H1 (cell line): ENCODE measurements at regions of chr18 and their contacts with region 1.

Region 1: GRCh38 chr18:13726232-13726971 is at the starts of genes FAM210A and RNMT:
- DNase-seq: peak; percentile 80 to 89
- H3K4me3 ChIP-seq: peak within 1 kb of the TSS; percentile 76 to 97 (median 95)
- H3K27ac ChIP-seq: peak within 1 kb of the TSS; percentile 82; the same call in 1 of the 2 replicates
- H3K4me1 ChIP-seq: peaks cover 0 to 5% (median 3%) of the 10 kb centered on the region in 4 experiments; a peak in 3 of 7 replicates
- H3K27me3 ChIP-seq: no peaks in the 10 kb centered on the region
- CTCF ChIP-seq: no peak
- EP300 ChIP-seq: no peak
- POLR2A ChIP-seq: peak in 1 of 2 experiments; percentile 56; a peak in 1 of 3 replicates
- RAD21 ChIP-seq: no peak
- total RNA-seq, gene FAM210A: 25.4 and 27.2 TPM in 2 replicates
- total RNA-seq, gene RNMT: 59.6 and 63.5 TPM in 2 replicates

Region 2: DNA sequence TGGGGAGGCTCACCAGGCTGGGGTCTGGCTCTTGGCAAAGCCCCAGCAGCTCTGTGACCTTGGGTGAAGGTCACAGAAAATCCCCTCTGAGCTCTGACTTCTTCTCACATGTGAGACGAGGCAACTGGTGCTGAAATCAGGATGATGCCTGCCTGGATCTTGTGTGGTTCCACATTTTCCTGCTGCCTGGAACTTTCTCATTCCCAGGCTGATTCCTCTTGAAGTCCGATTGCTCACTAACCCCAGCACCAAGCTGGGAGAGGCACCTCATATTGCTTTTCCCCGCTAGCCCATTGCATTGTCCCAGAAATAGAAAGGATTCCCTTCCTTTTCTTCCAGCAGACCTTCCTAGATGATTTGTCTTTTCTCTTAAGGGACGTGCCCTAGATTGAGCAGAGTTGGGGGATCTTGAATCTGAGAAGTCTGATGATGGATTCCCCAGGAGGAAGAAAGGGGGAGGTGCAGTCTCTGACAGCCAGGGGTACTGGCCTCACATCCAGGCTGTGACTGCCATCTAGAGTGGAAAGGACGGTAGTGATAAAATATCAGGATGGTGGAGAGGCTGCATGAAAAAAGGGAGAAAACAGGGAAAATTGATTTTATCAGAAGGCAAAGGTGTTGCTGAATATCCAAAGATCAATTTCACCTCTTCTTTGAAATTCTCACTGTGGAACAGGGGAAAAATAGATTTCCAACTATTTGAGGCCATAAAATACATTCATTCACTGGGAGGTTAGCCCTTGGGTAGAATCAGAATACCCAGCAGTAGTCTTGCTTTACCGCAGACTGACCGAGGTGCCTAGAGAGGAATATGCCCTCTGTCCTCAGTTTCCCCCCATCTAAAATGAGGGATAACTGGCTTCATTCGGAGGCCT is 96.3 kb before region 1 on chr18:
- CTCF ChIA-PET with region 1: no interaction called
- POLR2A ChIA-PET with region 1: no interaction called
- DNase-seq: no peak
- H3K4me3 ChIP-seq: no peak overlapping the region
- H3K27ac ChIP-seq: no peak overlapping the region; the same call in 1 of the 2 replicates
- H3K4me1 ChIP-seq: peaks cover 0 to 5% (median 4%) of the 10 kb centered on the region in 4 experiments; a peak in 4 of 7 replicates
- H3K27me3 ChIP-seq: no peaks in the 10 kb centered on the region
- CTCF ChIP-seq: peak in 2 of 3 experiments; percentile 87 to 97; a peak in 3 of 4 replicates
- EP300 ChIP-seq: no peak
- POLR2A ChIP-seq: no peak
- RAD21 ChIP-seq: peak; percentile 97 to 98

Region 3: DNA sequence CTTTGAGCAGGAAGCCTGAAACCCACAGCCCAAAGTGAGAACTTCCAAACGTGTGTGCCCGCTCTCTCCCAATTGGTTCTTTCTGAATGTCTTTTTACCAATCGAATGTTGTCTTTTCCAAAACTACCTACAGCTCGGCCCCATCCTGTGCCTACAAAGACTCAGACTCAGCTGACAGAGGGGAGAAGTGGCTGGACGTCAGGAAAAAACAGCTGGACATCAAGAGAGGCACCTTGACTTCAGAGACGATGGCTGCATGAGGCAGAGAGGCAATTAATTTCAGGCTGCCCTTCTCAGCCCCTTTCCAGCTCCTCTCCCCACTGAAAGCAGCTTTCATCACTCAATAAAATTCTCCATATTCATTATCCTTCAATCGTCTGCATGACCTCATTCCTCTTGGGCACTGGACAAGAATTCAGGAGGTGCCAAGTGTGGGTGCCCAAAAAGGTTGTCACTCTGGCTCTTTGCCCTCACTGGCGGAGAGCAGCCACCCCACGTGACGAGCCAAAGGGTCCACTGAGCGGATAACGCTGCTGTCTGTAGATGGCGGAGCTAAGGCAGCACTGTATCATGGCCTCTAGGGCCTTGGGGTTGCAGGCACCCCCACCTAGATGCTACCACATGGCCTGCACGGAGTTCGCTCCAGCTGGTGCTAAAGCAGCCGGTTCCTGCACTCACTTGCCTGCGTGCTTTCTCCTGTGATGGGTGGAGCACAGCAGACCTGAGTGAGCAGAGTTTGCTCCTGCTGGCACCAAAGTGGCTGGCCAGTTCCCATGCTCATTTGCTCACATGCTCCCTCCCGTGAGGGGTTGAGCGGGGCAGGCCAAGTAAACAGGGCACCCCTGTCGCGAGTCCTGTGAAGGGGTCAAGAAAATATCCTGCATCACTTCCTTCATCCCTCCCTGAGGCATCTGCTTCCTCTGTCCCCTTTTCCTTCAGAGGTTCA is 37.9 kb before region 1 on chr18:
- CTCF ChIA-PET with region 1: no interaction called
- POLR2A ChIA-PET with region 1: no interaction called
- DNase-seq: no peak
- H3K4me3 ChIP-seq: no peak overlapping the region
- H3K27ac ChIP-seq: no peak overlapping the region
- H3K4me1 ChIP-seq: no peaks in the 10 kb centered on the region; a peak in 1 of 7 replicates
- H3K27me3 ChIP-seq: no peaks in the 10 kb centered on the region
- CTCF ChIP-seq: no peak
- EP300 ChIP-seq: no peak
- POLR2A ChIP-seq: no peak
- RAD21 ChIP-seq: no peak

Region 4: DNA sequence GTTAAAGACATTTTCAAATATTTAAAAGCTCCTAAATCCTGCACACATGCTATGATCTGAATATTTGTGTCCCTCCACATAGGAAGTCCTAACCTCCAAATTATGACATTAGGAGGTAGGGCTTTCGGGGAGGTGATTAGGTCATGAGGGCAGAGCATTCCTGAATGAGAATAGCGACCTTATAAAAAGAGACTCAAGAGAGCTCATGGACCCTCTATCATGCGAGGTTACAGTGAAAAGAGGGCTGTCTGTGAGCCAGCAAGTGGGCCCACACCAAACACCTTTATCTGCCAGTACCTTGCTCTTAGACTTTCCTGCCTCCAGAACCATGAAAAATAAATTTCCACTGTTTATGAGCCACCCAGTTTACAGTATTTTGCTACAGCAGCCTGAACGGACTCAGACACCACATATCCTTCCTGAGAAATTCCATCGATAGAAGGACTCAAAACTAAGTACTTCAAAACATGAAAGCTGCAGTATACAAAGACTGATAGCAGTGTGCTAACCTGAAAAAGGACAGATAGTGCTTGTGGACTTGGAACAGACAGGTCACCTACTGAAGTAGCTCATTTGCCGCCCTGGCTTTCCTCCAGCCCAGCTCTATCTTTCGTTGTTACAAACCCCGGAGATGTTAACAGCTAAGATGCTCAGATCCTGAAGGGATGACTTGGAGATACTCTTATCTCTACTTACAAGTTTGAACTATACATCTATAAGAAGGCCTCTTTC is 13.8 kb before region 1 on chr18:
- CTCF ChIA-PET with region 1: no interaction called
- POLR2A ChIA-PET with region 1: interaction called, 16 read pairs
- DNase-seq: no peak
- H3K4me3 ChIP-seq: no peak overlapping the region
- H3K27ac ChIP-seq: no peak overlapping the region; the same call in 1 of the 2 replicates
- H3K4me1 ChIP-seq: peaks cover 0 to 5% (median 3%) of the 10 kb centered on the region in 4 experiments; a peak in 3 of 7 replicates
- H3K27me3 ChIP-seq: no peaks in the 10 kb centered on the region
- CTCF ChIP-seq: no peak
- EP300 ChIP-seq: no peak
- POLR2A ChIP-seq: no peak
- RAD21 ChIP-seq: no peak

Region 5: DNA sequence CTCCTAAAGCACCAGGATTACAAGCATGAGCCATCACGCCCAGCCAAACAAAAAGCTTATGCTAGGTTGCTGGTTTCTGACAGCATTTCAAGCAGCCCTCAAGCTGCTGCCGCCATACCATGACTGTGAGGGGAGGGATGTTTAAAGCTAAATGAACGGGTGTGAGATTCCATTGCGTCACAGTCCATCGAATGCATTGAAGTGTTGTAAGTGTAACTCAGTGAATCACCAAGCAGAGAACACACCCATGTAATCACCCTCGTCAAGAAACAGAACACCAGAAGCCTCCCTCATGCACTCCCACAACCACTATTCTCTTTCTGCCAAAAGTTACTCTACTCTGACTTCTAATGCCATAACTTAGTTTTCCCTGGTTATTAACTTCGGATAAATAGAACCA is 64.8 kb after region 1 on chr18:
- CTCF ChIA-PET with region 1: no interaction called
- POLR2A ChIA-PET with region 1: no interaction called
- DNase-seq: no peak
- H3K4me3 ChIP-seq: no peak overlapping the region
- H3K27ac ChIP-seq: no peak overlapping the region
- H3K4me1 ChIP-seq: no peaks in the 10 kb centered on the region
- H3K27me3 ChIP-seq: no peaks in the 10 kb centered on the region
- CTCF ChIP-seq: no peak
- EP300 ChIP-seq: no peak
- POLR2A ChIP-seq: no peak
- RAD21 ChIP-seq: no peak

Region 6: GRCh38 chr18:14086458-14087231 is 360.2 kb after region 1 on chr18:
- CTCF ChIA-PET with region 1: no interaction called
- POLR2A ChIA-PET with region 1: no interaction called
- DNase-seq: peak; percentile 34 to 60
- H3K4me3 ChIP-seq: no peak overlapping the region
- H3K27ac ChIP-seq: no peak overlapping the region
- H3K4me1 ChIP-seq: peaks cover 0 to 7% (median 4%) of the 10 kb centered on the region in 4 experiments; a peak in 5 of 7 replicates
- H3K27me3 ChIP-seq: no peaks in the 10 kb centered on the region
- CTCF ChIP-seq: peak in 2 of 3 experiments; percentile 78 to 86; a peak in 3 of 4 replicates
- EP300 ChIP-seq: no peak
- POLR2A ChIP-seq: no peak
- RAD21 ChIP-seq: peak; percentile 98